Breast epithelium (tissue), 4 donors: ENCODE measurements at regions of chr11 and their contacts with region 1.

Region 1: DNA sequence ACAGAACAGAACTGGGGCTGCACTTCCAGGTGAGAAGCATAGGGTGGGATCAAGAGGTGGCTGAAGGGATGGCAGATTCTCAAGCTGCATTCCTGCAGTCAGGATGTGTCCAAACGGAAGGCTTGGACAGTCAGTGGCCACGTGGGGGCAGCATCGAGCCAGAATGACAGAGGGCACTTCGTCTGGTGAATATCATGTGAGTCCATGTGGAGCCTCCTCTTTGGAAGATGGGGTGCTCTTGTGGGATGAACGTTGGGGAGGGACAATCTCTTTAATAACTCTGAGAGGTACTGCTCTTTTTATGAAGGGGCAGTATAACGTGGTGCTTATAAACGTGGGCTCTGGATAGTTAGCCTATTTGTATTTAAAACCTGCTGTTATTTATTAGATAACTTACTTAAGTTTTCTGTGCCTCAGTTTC is 154.9 kb upstream of the NAV2 start:
- DNase-seq: peak; percentile 71 to 89
- H3K4me3 ChIP-seq: no peak overlapping the region
- H3K27ac ChIP-seq: no peak overlapping the region
- H3K4me1 ChIP-seq: no peaks in the 10 kb centered on the region
- H3K27me3 ChIP-seq: no peaks in the 10 kb centered on the region
- CTCF ChIP-seq: peak; percentile 77 to 88 (median 79)
- POLR2A ChIP-seq: no peak

Region 2: GRCh38 chr11:19071255-19071654 is 486.5 kb before region 1 on chr11:
- intact Hi-C with region 1: loop called (anchors 5 kb)
- DNase-seq: peak in 1 of 2 donors; percentile 29
- H3K4me3 ChIP-seq: peak overlapping the region in 1 of 3 donors; percentile 50
- H3K27ac ChIP-seq: no peak overlapping the region
- H3K4me1 ChIP-seq: no peaks in the 10 kb centered on the region
- H3K27me3 ChIP-seq: no peaks in the 10 kb centered on the region
- CTCF ChIP-seq: peak; percentile 89 to 98 (median 97)
- POLR2A ChIP-seq: no peak

Region 3: DNA sequence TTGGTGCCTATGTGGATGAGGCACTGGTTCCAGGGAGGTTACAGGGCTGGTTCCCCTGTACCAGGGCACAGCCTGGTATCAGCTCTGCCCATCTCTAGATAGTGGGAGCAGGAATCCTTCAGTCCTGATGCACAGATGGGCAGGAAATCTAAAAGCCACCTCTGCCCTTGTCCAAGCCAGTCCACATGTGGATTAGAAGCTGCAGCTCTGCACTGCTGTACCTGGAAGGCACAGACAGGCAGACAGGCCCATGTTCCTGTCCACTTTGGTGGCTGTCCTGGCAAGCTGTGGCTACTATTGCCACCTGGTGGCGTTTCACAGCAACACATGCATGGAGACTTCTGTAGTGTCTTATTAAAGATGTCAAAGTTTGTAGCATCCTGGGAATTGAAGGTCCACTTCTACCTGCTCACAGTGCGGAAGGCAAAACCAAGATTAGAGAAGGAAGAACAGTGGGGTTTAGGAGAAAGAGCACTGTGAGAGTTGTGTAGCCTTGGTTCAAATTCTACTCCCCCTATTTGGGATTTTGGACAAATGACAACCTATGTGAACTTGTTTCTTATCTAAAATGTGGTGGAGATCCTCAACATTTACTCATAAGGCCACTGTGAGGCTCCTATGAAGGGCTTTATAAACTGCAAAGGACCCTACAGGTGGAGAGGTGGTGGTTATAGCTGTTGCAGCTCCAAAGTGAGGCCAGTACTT is 185.0 kb after region 1 on chr11:
- intact Hi-C with region 1: loop called (anchors 10 kb)
- DNase-seq: peak; percentile 81 to 88
- H3K4me3 ChIP-seq: no peak overlapping the region
- H3K27ac ChIP-seq: no peak overlapping the region
- H3K4me1 ChIP-seq: no peaks in the 10 kb centered on the region
- H3K27me3 ChIP-seq: no peaks in the 10 kb centered on the region
- CTCF ChIP-seq: peak; percentile 90 to 97 (median 96)
- POLR2A ChIP-seq: no peak

Region 4: GRCh38 chr11:19903620-19904069 is 345.9 kb after region 1 on chr11:
- intact Hi-C with region 1: loop called (anchors 5 kb)
- DNase-seq: peak; percentile 62 to 65
- H3K4me3 ChIP-seq: no peak overlapping the region
- H3K27ac ChIP-seq: no peak overlapping the region
- H3K4me1 ChIP-seq: no peaks in the 10 kb centered on the region
- H3K27me3 ChIP-seq: no peaks in the 10 kb centered on the region
- CTCF ChIP-seq: peak; percentile 49 to 84 (median 82)
- POLR2A ChIP-seq: no peak

Region 5: DNA sequence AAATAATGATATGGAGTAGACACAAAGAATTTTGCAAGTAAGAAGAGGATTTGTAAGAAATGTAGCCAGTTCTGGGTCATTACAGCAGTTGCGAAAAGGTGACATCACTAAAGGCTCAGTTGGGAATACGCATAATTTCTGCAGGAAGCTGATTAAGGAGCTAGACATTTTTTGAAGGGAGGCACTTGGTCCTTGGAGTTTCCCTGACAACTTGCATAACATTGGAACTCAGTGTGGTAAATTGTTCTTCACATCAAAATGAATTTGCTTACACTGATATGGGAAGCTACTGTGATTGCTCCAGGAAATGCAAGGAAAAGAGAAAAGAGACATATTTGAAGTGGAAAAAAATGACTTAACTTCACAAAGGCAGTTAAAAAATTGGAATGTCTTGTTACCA is 1737.8 kb after region 1 on chr11:
- intact Hi-C with region 1: no loop called
- DNase-seq: no peak
- H3K4me3 ChIP-seq: no peak overlapping the region
- H3K27ac ChIP-seq: no peak overlapping the region
- H3K4me1 ChIP-seq: no peaks in the 10 kb centered on the region
- H3K27me3 ChIP-seq: no peaks in the 10 kb centered on the region
- CTCF ChIP-seq: no peak
- POLR2A ChIP-seq: no peak